HEK293 (cell line): ENCODE measurements at regions of chr15 and their contacts with region 1.

Region 1: GRCh38 chr15:90214553-90215196 is 13.5 kb downstream of the SEMA4B start:
- H3K4me3 ChIP-seq: no peak overlapping the region
- H3K27ac ChIP-seq: no peak overlapping the region
- H3K4me1 ChIP-seq: peaks cover 12% of the 10 kb centered on the region
- CTCF ChIP-seq: 0 out of 2 replicates have a peak, but pooled peaks have one; percentile 60

Region 2: GRCh38 chr15:90191794-90192509 is 22.7 kb before region 1 on chr15:
- CTCF ChIA-PET with region 1: interaction called, 12 read pairs
- POLR2A ChIA-PET with region 1: interaction called, 3 read pairs
- H3K4me3 ChIP-seq: no peak overlapping the region
- H3K27ac ChIP-seq: no peak overlapping the region
- H3K4me1 ChIP-seq: peaks cover 7% of the 10 kb centered on the region
- CTCF ChIP-seq: no peak

Region 3: GRCh38 chr15:90201130-90201949 is 13.3 kb before region 1 on chr15 and contains the start of gene SEMA4B:
- CTCF ChIA-PET with region 1: interaction called, 33 read pairs
- POLR2A ChIA-PET with region 1: interaction called, 14 read pairs
- H3K4me3 ChIP-seq: peak within 1 kb of the TSS; percentile 67
- H3K27ac ChIP-seq: peak within 1 kb of the TSS; percentile 56; the same call in 1 of the 2 replicates
- H3K4me1 ChIP-seq: peaks cover 8% of the 10 kb centered on the region
- CTCF ChIP-seq: peak; percentile 21; the same call in 1 of the 2 replicates